ENCODE measurements at regions of chr15 and their contacts with region 1.

Region 1: GRCh38 chr15:74036271-74037170 is 42.0 kb downstream of the PML start:
- DNase-seq: peak; percentile 25
- H3K4me3 Mint-ChIP-seq: no peak overlapping the region
- H3K27ac Mint-ChIP-seq: peak overlapping the region; percentile 10
- H3K4me1 Mint-ChIP-seq: no peaks in the 10 kb centered on the region
- H3K27me3 Mint-ChIP-seq: no peaks in the 10 kb centered on the region

Region 2: GRCh38 chr15:74047781-74048180 is 11.3 kb after region 1 on chr15:
- CTCF ChIA-PET with region 1: interaction called, 20 read pairs
- intact Hi-C with region 1: no loop called
- DNase-seq: no peak
- H3K4me3 Mint-ChIP-seq: no peak overlapping the region
- H3K27ac Mint-ChIP-seq: no peak overlapping the region
- H3K4me1 Mint-ChIP-seq: peaks cover 10% of the 10 kb centered on the region
- H3K27me3 Mint-ChIP-seq: no peaks in the 10 kb centered on the region

Region 3: DNA sequence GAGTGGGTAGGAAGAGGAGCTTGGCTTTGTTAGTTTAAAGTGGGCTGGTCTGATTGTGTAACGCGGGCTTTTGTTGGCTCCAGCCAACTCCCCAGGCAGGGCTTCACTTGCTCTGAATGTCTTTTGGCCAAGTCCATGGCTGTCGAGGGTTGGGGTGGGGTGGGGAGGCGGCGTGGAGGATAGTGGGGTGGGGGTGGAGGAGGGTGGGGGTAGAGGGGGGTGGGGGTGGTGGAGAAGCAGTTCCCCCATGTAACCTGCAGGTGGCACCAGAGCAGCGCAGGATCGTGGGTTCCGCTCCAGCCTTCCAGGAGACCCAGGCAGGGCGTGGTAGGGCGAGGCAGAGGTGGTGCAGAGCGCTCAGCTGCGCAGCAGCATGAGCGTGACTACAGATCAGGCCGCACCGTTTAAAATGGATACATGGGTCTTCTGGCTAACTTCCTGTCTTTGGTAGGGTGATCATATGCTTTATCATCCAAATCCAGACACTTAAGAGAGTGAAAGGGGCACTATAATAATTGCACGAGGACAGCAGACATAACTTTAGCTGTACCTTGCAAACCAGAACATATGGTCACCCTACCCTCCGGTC is 17.5 kb after region 1 on chr15:
- CTCF ChIA-PET with region 1: interaction called, 20 read pairs
- intact Hi-C with region 1: no loop called
- DNase-seq: peak; percentile 82
- H3K4me3 Mint-ChIP-seq: peak overlapping the region; percentile 23
- H3K27ac Mint-ChIP-seq: no peak overlapping the region
- H3K4me1 Mint-ChIP-seq: peaks cover 5% of the 10 kb centered on the region
- H3K27me3 Mint-ChIP-seq: no peaks in the 10 kb centered on the region

Measured in activated naive CD4-positive, alpha-beta T cell treated with anti-CD3 and anti-CD28 coated beads for 36 hours (primary cell).